ENCODE measurements at regions of chr6 and their contacts with region 1.

Region 1: DNA sequence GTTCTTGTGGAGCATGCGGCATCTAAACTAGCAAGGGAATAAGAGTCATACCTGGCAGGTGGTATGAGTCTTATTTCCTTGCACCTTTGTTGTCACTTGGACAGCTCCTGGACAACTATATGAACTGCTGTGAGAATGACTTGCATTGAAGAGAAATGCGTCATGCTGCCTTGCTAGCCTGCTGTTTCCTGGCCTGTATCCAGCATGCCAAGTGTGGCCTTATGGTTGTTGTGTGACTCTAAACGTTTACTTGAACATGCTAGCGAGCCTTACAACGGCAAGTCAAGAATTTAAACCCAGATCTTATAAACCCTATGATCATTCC is 90.4 kb downstream of the CEP162 start:
- DNase-seq: no peak
- H3K4me3 ChIP-seq: no peak overlapping the region
- H3K27ac ChIP-seq: no peak overlapping the region
- H3K4me1 ChIP-seq: no peaks in the 10 kb centered on the region
- H3K27me3 ChIP-seq: no peaks in the 10 kb centered on the region
- CTCF ChIP-seq: no peak
- EP300 ChIP-seq: no peak
- POLR2A ChIP-seq: no peak

Region 2: GRCh38 chr6:82205930-82206392 is 1931.1 kb before region 1 on chr6:
- intact Hi-C with region 1: no loop called
- DNase-seq: no peak
- H3K4me3 ChIP-seq: no peak overlapping the region
- H3K27ac ChIP-seq: no peak overlapping the region
- H3K4me1 ChIP-seq: peaks cover 4% of the 10 kb centered on the region
- H3K27me3 ChIP-seq: no peaks in the 10 kb centered on the region
- CTCF ChIP-seq: no peak
- EP300 ChIP-seq: no peak
- POLR2A ChIP-seq: no peak

Region 3: GRCh38 chr6:84428300-84428907 is 291.4 kb after region 1 on chr6:
- intact Hi-C with region 1: loop called in 1 of 4 experiments (anchors 5 kb)
- DNase-seq: no peak
- H3K4me3 ChIP-seq: no peak overlapping the region
- H3K27ac ChIP-seq: no peak overlapping the region
- H3K4me1 ChIP-seq: no peaks in the 10 kb centered on the region
- H3K27me3 ChIP-seq: no peaks in the 10 kb centered on the region
- CTCF ChIP-seq: no peak
- EP300 ChIP-seq: no peak
- POLR2A ChIP-seq: no peak

Region 4: GRCh38 chr6:84635081-84635761 is 498.2 kb after region 1 on chr6:
- intact Hi-C with region 1: no loop called
- DNase-seq: no peak
- H3K4me3 ChIP-seq: no peak overlapping the region
- H3K27ac ChIP-seq: no peak overlapping the region
- H3K4me1 ChIP-seq: no peaks in the 10 kb centered on the region
- H3K27me3 ChIP-seq: no peaks in the 10 kb centered on the region
- CTCF ChIP-seq: no peak
- EP300 ChIP-seq: no peak
- POLR2A ChIP-seq: no peak